ENCODE measurements at regions of chr11 and their contacts with region 1.

Region 1: GRCh38 chr11:65961232-65961901 is at the start of gene SART1:
- DNase-seq: peak; percentile 92 to 99 (median 96)
- ATAC-seq: peak; percentile 88
- H3K4me3 ChIP-seq: peak within 1 kb of the TSS; percentile 62 to 65
- H3K4me3 Mint-ChIP-seq: peak within 1 kb of the TSS; percentile 98
- H3K27ac ChIP-seq: peak within 1 kb of the TSS; percentile 83 to 85
- H3K27ac Mint-ChIP-seq: peak within 1 kb of the TSS; percentile 99
- H3K4me1 ChIP-seq: peaks cover 38% of the 10 kb centered on the region
- H3K4me1 Mint-ChIP-seq: peaks cover 53% of the 10 kb centered on the region
- H3K27me3 ChIP-seq: no peaks in the 10 kb centered on the region
- H3K27me3 Mint-ChIP-seq: no peaks in the 10 kb centered on the region
- CTCF ChIP-seq: no peak
- total RNA-seq, gene SART1: 102 to 123 TPM

Region 2: DNA sequence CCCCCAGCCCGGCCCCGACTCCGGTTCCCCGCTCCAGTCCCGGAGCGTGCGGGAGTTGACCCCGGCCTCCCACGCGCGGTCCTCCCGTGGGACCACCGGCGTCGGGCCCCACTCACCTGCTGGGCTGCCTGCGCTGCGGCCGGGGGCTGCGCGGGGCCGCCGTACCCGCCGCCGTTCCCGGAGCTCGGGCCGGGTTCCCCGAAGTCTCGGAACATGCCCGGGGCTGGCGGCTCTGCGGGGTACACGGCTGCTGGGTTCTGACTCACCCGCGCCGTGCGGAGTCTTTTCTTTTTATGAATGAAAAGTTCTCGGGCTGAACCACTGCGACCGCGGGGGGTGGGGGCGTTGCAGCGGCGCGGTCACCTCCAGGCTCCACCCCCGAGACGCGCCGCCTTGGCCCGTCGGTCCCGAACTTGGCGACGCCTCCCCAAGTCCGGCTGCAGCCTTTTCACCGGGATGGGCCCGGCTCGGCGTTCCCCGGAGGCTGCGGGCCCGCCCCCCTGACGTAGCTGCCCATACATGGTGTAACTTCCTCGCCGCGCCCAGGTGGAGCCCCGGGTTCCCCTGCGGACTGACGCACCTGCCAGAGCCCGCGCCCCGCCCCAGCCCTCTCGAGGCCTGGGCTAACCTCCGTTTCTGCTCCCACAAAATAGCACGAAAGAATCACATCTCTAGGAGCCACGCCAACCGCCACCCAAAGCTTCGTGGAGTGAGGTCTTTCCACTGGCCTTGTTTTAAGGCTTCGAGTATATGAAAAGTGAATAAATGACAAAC is 61.1 kb before region 1 on chr11 and contains the start of gene FOSL1:
- CTCF ChIA-PET with region 1: no interaction called
- POLR2A ChIA-PET with region 1: no interaction called
- intact Hi-C with region 1: loop called in 1 of 2 experiments (anchors 1 kb)
- DNase-seq: peak; percentile 82 to 97 (median 91)
- ATAC-seq: peak; percentile 93
- H3K4me3 ChIP-seq: peak within 1 kb of the TSS; percentile 36 to 49
- H3K4me3 Mint-ChIP-seq: peak within 1 kb of the TSS; percentile 73
- H3K27ac ChIP-seq: peak within 1 kb of the TSS; percentile 0 to 32
- H3K27ac Mint-ChIP-seq: peak within 1 kb of the TSS; percentile 69
- H3K4me1 ChIP-seq: peaks cover 20% of the 10 kb centered on the region
- H3K4me1 Mint-ChIP-seq: peaks cover 8% of the 10 kb centered on the region
- H3K27me3 ChIP-seq: peaks cover 0 to 4% of the 10 kb centered on the region in 2 experiments
- H3K27me3 Mint-ChIP-seq: no peaks in the 10 kb centered on the region
- CTCF ChIP-seq: no peak
- total RNA-seq, gene FOSL1: 2.0 to 4.0 TPM

Region 3: GRCh38 chr11:65927904-65928397 is 33.4 kb before region 1 on chr11:
- CTCF ChIA-PET with region 1: interaction called, 3 read pairs
- POLR2A ChIA-PET with region 1: interaction called, 6 read pairs
- intact Hi-C with region 1: loop called (anchors 1 kb)
- DNase-seq: peak; percentile 63 to 94 (median 83)
- ATAC-seq: peak; percentile 95
- H3K4me3 ChIP-seq: peak overlapping the region; percentile 42
- H3K4me3 Mint-ChIP-seq: peak overlapping the region; percentile 74
- H3K27ac ChIP-seq: peak overlapping the region; percentile 62 to 88
- H3K27ac Mint-ChIP-seq: peak overlapping the region; percentile 91
- H3K4me1 ChIP-seq: peaks cover 41% of the 10 kb centered on the region
- H3K4me1 Mint-ChIP-seq: peaks cover 39% of the 10 kb centered on the region
- H3K27me3 ChIP-seq: no peaks in the 10 kb centered on the region
- H3K27me3 Mint-ChIP-seq: no peaks in the 10 kb centered on the region
- CTCF ChIP-seq: no peak

Region 4: DNA sequence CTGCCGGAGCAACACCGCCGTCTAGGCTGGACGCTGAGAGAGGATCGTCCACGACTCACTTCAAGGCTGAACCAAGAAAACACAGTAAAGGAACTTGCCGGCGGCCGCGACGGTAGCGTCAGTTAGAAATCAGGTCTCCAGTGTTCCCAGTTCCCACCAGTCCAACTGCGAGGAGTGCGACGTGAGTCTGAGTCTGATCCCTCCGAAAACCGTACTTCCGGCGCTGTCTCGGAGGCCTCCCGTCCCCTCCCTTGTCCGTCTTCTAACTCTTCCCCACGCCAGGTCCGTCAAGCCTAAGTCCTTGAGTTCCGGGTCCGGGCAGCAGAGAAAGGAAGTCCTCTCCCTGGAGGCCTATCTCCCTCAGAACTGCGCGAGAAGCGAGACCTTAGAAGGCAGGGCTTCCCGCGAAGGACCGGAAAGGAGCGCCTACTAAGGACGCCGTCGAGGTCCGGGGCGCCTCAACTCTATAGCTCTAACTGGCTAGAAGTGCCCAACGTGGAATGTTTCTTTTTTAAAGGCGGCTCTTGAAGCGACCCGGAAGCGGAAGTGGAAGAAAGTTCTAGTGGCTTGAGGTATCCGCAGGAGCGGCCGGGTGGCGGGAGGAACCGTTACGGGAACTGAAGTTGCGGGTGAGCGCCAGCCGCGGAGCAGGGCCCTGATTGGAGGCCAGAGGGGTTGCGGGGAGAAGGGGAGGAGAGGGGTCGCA is 40.7 kb after region 1 on chr11 and contains the starts of genes BANF1 and EIF1AD:
- CTCF ChIA-PET with region 1: no interaction called
- POLR2A ChIA-PET with region 1: interaction called, 3 read pairs
- intact Hi-C with region 1: loop called (anchors 1 kb)
- DNase-seq: peak; percentile 85 to 98 (median 92)
- ATAC-seq: peak; percentile 83
- H3K4me3 ChIP-seq: peak within 1 kb of the TSS; percentile 80 to 98
- H3K4me3 Mint-ChIP-seq: peak within 1 kb of the TSS; percentile 99
- H3K27ac ChIP-seq: peak within 1 kb of the TSS; percentile 93 to 95
- H3K27ac Mint-ChIP-seq: peak within 1 kb of the TSS; percentile 98
- H3K4me1 ChIP-seq: peaks cover 21% of the 10 kb centered on the region
- H3K4me1 Mint-ChIP-seq: peaks cover 43% of the 10 kb centered on the region
- H3K27me3 ChIP-seq: no peaks in the 10 kb centered on the region
- H3K27me3 Mint-ChIP-seq: no peaks in the 10 kb centered on the region
- CTCF ChIP-seq: no peak
- total RNA-seq, gene BANF1: 31.6 to 34.0 TPM
- total RNA-seq, gene EIF1AD: 119 to 126 TPM